Activated B cell treated with CpG ODN at 0.5 μM for 24 hours (primary cell): ENCODE measurements at regions of chr18 and their contacts with region 1.

Region 1: DNA sequence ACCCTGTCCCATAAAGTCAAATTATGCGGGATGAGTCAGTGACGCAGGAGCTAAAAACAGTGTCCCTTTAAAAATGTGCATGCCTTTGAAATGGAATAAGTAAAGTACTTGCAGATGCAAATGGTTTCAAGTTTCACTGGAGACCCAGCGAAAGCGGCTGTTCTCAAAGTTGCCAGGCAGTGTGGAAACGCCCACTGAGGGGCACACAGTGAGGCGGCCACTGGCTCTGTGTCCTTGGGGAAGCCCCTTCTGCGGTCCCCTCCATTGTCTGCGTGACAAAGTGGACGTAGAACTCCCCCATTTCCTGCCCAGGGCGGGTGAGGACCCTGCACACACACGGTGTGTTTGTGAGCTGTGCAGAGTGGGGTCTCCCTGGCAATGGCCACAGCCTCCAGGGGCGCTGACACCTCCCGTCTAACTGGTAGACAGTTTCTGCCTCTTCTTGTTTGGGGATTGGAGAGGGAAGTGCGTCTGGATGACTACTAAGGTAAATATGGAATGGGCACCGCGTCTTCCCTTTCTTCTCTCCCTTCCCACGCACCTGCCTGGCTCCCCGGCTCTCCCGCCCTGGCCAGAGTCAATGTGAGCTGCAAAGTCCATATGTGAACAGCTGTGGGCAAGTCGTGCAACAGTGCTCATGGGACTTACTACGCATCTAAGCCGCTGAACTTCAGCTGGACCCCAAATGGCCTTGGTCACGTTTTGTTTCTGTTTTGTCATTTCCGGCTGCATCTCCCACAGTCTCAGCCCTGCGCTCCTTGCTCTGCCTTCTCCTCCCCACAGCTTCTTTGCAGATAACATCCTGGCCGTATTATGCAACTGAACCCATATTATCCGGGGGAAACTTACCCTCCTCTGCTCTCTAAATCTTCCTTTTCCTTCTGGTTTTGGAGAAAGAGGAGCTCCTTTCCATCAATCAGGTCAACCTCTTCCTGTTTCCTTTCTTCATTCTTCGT is 33.7 kb upstream of the ZNF516 start:
- DNase-seq: no peak
- ATAC-seq: no peak
- H3K4me3 Mint-ChIP-seq: peak overlapping the region; percentile 67
- H3K27ac Mint-ChIP-seq: no peak overlapping the region
- H3K4me1 Mint-ChIP-seq: peaks cover 6% of the 10 kb centered on the region
- H3K27me3 Mint-ChIP-seq: peaks cover 25% of the 10 kb centered on the region
- CTCF ChIP-seq: no peak

Region 2: GRCh38 chr18:75518007-75518406 is 1010.7 kb before region 1 on chr18:
- CTCF ChIA-PET with region 1: no interaction called
- POLR2A ChIA-PET with region 1: no interaction called
- intact Hi-C with region 1: no loop called
- DNase-seq: no peak
- ATAC-seq: no peak
- H3K4me3 Mint-ChIP-seq: no peak overlapping the region
- H3K27ac Mint-ChIP-seq: no peak overlapping the region
- H3K4me1 Mint-ChIP-seq: no peaks in the 10 kb centered on the region
- H3K27me3 Mint-ChIP-seq: no peaks in the 10 kb centered on the region
- CTCF ChIP-seq: no peak

Region 3: DNA sequence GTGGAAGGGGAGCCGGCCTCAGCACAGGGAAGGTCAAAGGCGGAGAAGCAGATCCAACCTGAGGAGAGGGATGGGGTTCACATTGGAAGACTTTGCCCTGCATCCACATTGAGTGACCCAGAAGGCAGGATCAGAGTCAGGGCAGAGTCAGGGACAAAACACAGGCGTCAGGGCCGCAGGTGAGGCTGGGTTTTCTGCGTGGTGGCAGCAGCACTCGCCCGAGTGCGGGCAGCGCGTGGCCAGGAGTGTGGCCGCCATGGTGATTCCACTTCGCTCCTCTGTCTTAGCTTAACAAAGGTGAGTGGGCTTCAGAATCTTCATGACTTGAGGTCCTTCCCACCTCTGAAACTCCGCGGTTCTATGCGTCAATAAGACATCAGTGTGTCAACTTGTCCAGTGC is 624.3 kb before region 1 on chr18:
- CTCF ChIA-PET with region 1: no interaction called
- POLR2A ChIA-PET with region 1: no interaction called
- intact Hi-C with region 1: no loop called
- DNase-seq: no peak
- ATAC-seq: no peak
- H3K4me3 Mint-ChIP-seq: no peak overlapping the region
- H3K27ac Mint-ChIP-seq: no peak overlapping the region
- H3K4me1 Mint-ChIP-seq: no peaks in the 10 kb centered on the region
- H3K27me3 Mint-ChIP-seq: no peaks in the 10 kb centered on the region
- CTCF ChIP-seq: no peak

Region 4: DNA sequence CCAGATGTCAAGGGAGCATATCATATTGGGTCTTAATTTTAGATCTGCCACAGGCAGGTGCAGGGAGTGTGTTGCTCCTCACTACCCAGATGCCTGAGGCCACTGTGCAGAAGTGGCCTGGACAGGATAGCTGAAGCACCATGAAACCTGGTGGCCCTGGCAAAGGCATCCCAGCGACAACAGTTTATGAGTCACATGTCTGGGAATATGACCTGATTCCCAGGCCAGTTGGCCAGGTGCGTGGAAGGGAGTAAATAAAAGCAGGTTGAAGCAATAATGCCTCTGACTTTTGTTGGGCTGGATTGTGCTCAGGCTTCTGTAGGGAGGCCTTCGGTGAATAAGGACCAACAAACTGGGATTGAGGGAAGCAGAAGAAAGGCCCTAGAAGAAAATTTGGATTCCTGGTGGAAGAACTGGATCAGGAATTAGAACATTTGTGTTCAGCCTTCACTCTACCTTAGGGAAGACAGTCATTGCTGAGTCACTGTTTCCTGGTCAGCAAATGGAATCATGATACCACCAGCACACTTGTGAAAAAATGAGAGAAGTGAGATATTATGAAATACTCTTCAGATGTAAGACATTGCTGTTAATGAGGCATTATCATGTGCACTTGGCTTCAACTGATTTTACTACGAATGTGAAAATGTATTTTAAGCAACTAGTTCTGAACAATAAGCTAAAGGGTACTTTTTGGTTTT is 44.7 kb after region 1 on chr18:
- CTCF ChIA-PET with region 1: no interaction called
- POLR2A ChIA-PET with region 1: no interaction called
- intact Hi-C with region 1: loop called (anchors 10 kb)
- DNase-seq: no peak
- ATAC-seq: no peak
- H3K4me3 Mint-ChIP-seq: no peak overlapping the region
- H3K27ac Mint-ChIP-seq: no peak overlapping the region
- H3K4me1 Mint-ChIP-seq: no peaks in the 10 kb centered on the region
- H3K27me3 Mint-ChIP-seq: peaks cover 13% of the 10 kb centered on the region
- CTCF ChIP-seq: no peak

Region 5: DNA sequence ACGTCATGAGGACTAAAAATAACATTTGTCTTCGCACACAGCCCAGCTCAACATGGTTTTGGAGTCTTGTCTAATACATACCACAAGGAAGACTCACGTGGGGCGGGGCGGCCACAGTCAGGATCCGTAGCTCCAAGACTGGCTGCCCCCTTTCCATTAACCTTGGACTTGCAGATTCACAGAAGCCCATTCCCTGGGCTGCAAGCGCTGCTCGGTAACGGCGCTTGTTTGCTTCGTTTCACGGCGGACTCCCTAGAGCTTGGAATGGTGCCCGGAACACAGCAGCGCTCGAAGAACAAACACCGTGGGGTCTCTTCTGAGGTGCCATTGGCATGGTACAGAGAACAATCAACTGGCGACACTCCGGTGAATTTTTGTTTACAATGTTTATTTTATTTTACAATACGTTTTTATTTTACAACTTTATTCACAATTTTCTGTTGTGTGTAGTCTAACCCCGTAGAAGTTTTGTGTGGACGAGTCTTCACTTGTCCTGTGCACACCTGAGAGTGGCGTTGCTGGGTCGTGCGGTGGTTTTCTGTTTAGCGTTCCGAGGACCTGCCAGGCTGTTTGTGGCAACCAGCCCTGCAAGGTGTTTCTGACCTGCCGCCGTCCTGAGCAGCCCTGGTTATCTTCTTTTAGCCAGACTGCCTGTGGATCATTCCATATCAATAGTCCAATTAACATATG is 847.4 kb after region 1 on chr18:
- CTCF ChIA-PET with region 1: no interaction called
- POLR2A ChIA-PET with region 1: no interaction called
- intact Hi-C with region 1: no loop called
- DNase-seq: no peak
- ATAC-seq: no peak
- H3K4me3 Mint-ChIP-seq: no peak overlapping the region
- H3K27ac Mint-ChIP-seq: no peak overlapping the region
- H3K4me1 Mint-ChIP-seq: no peaks in the 10 kb centered on the region
- H3K27me3 Mint-ChIP-seq: peaks cover 9% of the 10 kb centered on the region
- CTCF ChIP-seq: no peak